ENCODE measurements at regions of chr2 and their contacts with region 1.

Region 1: GRCh38 chr2:30231212-30231995 is at the start of gene LBH:
- DNase-seq: peak; percentile 82 to 97 (median 89)
- ATAC-seq: peak; percentile 48
- H3K4me3 ChIP-seq: peak within 1 kb of the TSS; percentile 89 to 96
- H3K4me3 Mint-ChIP-seq: peak within 1 kb of the TSS; percentile 94
- H3K27ac ChIP-seq: peak within 1 kb of the TSS; percentile 92 to 99
- H3K27ac Mint-ChIP-seq: peak within 1 kb of the TSS; percentile 96
- H3K4me1 ChIP-seq: peaks cover 52% of the 10 kb centered on the region
- H3K4me1 Mint-ChIP-seq: peaks cover 64% of the 10 kb centered on the region
- H3K27me3 ChIP-seq: no peaks in the 10 kb centered on the region
- H3K27me3 Mint-ChIP-seq: no peaks in the 10 kb centered on the region
- CTCF ChIP-seq: no peak
- total RNA-seq, gene LBH: 127 to 133 TPM

Region 2: DNA sequence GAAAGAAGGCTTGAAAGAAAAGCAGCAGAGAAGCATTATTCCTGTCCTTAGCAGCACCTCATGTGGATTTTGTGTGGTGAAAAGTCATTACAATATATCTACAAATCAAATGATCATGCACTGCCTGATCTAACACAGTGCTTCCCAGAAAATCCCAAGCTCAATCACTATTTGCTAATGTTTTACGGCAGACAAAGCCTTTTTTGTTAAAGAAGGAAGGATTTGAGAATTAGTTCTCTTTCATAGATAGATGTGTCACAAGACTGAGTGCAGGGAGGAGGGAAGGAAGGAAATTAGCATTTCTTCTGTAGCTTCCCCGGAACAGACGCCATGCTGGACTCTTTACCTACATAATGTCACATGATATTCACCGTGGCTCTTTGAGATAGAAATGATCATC is 513.1 kb before region 1 on chr2:
- CTCF ChIA-PET with region 1: no interaction called
- POLR2A ChIA-PET with region 1: no interaction called
- intact Hi-C with region 1: no loop called
- DNase-seq: no peak
- ATAC-seq: no peak
- H3K4me3 ChIP-seq: no peak overlapping the region
- H3K4me3 Mint-ChIP-seq: no peak overlapping the region
- H3K27ac ChIP-seq: no peak overlapping the region
- H3K27ac Mint-ChIP-seq: no peak overlapping the region
- H3K4me1 ChIP-seq: no peaks in the 10 kb centered on the region
- H3K4me1 Mint-ChIP-seq: no peaks in the 10 kb centered on the region
- H3K27me3 ChIP-seq: no peaks in the 10 kb centered on the region
- H3K27me3 Mint-ChIP-seq: peaks cover 10% of the 10 kb centered on the region
- CTCF ChIP-seq: no peak

Region 3: DNA sequence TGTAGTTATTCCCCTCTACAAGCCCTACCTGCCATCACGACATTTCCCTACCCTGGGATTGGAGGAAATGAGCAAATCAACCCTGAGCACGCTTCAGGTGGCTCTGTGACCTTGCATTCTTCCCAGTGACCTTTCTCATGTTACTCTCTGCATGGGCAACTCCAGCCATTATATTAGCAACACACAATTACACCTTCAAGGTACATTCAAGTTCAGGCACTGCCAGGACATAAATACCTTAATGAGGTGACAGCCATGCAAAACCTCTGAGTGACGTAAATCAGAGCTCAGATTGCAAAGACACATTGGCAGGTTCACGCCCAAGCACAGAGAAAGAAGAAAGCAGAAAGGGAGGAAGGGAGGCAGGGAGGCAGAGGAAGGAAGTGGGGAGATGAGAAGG is 241.3 kb before region 1 on chr2:
- CTCF ChIA-PET with region 1: no interaction called
- POLR2A ChIA-PET with region 1: no interaction called
- intact Hi-C with region 1: no loop called
- DNase-seq: no peak
- ATAC-seq: no peak
- H3K4me3 ChIP-seq: no peak overlapping the region
- H3K4me3 Mint-ChIP-seq: no peak overlapping the region
- H3K27ac ChIP-seq: no peak overlapping the region
- H3K27ac Mint-ChIP-seq: no peak overlapping the region
- H3K4me1 ChIP-seq: no peaks in the 10 kb centered on the region
- H3K4me1 Mint-ChIP-seq: no peaks in the 10 kb centered on the region
- H3K27me3 ChIP-seq: peaks cover 0 to 4% of the 10 kb centered on the region in 2 experiments
- H3K27me3 Mint-ChIP-seq: peaks cover 17% of the 10 kb centered on the region
- CTCF ChIP-seq: no peak

Region 4: GRCh38 chr2:30146438-30147147 is 84.8 kb before region 1 on chr2 and contains the start of gene YPEL5:
- CTCF ChIA-PET with region 1: interaction called, 8 read pairs
- POLR2A ChIA-PET with region 1: interaction called, 83 read pairs
- intact Hi-C with region 1: loop called (anchors 1 kb)
- DNase-seq: peak; percentile 99 to 100 (median 100)
- ATAC-seq: peak; percentile 82
- H3K4me3 ChIP-seq: peak within 1 kb of the TSS; percentile 75 to 76
- H3K4me3 Mint-ChIP-seq: peak within 1 kb of the TSS; percentile 89
- H3K27ac ChIP-seq: peak within 1 kb of the TSS; percentile 97 to 100
- H3K27ac Mint-ChIP-seq: peak within 1 kb of the TSS; percentile 100
- H3K4me1 ChIP-seq: peaks cover 50% of the 10 kb centered on the region
- H3K4me1 Mint-ChIP-seq: peaks cover 60% of the 10 kb centered on the region
- H3K27me3 ChIP-seq: no peaks in the 10 kb centered on the region
- H3K27me3 Mint-ChIP-seq: no peaks in the 10 kb centered on the region
- CTCF ChIP-seq: no peak
- total RNA-seq, gene YPEL5: 1,051 to 1,071 TPM

Region 5: DNA sequence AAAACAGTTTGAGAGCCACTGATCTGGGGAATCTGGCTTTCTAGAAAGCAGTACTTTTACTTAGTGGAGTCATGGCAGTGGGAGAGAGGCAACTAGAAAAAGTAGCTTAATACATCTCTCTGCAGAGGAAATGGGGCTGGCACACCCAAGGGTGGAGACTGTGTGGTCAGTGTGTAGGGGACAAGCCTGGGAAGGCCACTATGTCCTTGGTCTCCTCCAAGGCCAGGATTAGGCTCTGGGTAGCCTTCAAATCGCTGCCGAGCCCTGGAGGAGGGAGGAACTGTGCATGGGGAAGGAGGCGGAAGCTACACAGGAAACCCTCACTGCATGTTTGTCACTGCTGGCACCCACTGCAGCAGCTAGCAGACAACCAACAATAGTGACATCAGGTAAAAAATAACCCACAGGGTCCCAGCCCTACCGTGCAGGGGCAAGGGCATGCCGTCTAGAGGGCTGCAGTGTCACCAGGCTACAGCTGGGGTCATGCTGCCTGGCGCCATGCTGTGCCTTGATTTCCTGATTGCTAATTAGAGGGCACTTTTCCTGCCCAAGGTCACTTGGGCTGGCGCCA is 34.7 kb after region 1 on chr2:
- CTCF ChIA-PET with region 1: interaction called, 4 read pairs
- POLR2A ChIA-PET with region 1: interaction called, 63 read pairs
- intact Hi-C with region 1: loop called (anchors 1 to 2 kb)
- DNase-seq: peak; percentile 49 to 89 (median 71)
- ATAC-seq: peak; percentile 90
- H3K4me3 ChIP-seq: peak overlapping the region; percentile 31 to 40
- H3K4me3 Mint-ChIP-seq: peak overlapping the region; percentile 82
- H3K27ac ChIP-seq: peak overlapping the region; percentile 72 to 87
- H3K27ac Mint-ChIP-seq: peak overlapping the region; percentile 98
- H3K4me1 ChIP-seq: peaks cover 69% of the 10 kb centered on the region
- H3K4me1 Mint-ChIP-seq: peaks cover 85% of the 10 kb centered on the region
- H3K27me3 ChIP-seq: no peaks in the 10 kb centered on the region
- H3K27me3 Mint-ChIP-seq: no peaks in the 10 kb centered on the region
- CTCF ChIP-seq: no peak

Region 6: DNA sequence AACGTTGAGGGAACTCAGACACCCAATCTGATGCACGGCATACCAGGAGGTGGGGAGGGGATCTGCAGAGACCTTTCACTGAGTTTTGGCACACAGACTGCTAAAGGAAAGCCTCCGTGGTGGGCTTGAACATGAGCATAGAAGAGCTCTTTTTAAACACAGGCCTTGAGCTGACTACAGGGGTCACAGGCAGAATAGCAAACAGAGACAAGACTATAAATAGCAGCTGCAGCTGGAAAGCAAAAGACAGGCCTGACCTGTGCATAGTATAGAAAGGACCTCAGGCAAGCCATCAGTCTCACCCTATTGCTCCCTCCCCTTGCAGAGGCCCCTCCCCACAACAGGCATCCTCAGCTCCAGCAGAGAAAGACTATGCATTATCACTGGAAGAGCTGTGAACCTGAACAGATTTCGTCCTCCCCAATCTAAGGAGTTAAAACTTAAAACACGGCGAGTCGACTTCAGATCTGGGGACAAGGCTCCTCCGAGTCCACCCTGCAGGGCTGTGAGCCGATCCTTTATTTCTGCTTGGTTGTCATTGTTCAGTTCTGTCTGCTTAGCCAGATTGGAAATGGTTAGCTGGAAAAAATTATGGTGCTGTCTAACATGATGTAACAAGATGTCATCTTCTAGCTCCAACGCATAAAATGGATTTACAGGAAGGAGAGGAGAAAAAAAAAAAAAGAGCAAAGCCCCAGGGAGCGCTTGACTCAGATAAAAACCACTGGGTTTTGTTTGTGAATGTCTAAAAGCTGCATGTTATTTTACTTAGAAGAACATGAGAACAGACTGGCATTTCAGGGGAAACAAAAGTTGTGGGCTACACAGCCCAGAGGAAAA is 190.4 kb after region 1 on chr2:
- CTCF ChIA-PET with region 1: interaction called, 9 read pairs
- POLR2A ChIA-PET with region 1: interaction called, 30 read pairs
- intact Hi-C with region 1: loop called (anchors 1 to 5 kb)
- DNase-seq: peak in 6 of 9 experiments; percentile 27 to 81 (median 57)
- ATAC-seq: peak; percentile 45
- H3K4me3 ChIP-seq: peak overlapping the region in 1 of 2 experiments; percentile 26
- H3K4me3 Mint-ChIP-seq: peak overlapping the region; percentile 53
- H3K27ac ChIP-seq: peak overlapping the region; percentile 60 to 70
- H3K27ac Mint-ChIP-seq: peak overlapping the region; percentile 95
- H3K4me1 ChIP-seq: peaks cover 54% of the 10 kb centered on the region
- H3K4me1 Mint-ChIP-seq: peaks cover 51% of the 10 kb centered on the region
- H3K27me3 ChIP-seq: no peaks in the 10 kb centered on the region
- H3K27me3 Mint-ChIP-seq: no peaks in the 10 kb centered on the region
- CTCF ChIP-seq: no peak

Region 7: DNA sequence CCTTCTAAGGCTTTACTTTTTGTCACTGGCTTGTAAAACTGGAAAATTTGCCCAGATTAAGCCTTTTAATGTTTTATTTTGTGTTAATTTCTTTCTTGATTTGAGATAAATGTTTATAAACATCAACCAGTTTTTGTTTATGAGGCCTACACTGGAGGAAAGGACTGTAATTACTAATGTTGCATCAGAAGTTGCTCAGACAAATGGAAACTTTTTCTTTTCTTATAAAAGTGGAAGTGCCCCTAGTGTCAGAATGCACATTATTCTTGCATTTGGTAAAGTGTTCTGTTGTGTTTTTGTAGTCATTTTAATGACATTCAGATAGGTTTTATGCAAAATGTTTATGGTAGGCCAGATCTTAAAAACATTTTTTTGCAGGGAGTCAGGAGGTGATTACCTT is 240.9 kb after region 1 on chr2:
- CTCF ChIA-PET with region 1: interaction called, 9 read pairs
- POLR2A ChIA-PET with region 1: interaction called, 10 read pairs
- intact Hi-C with region 1: loop called in 1 of 2 experiments (anchors 2 kb)
- DNase-seq: no peak
- ATAC-seq: no peak
- H3K4me3 ChIP-seq: no peak overlapping the region
- H3K4me3 Mint-ChIP-seq: no peak overlapping the region
- H3K27ac ChIP-seq: no peak overlapping the region
- H3K27ac Mint-ChIP-seq: no peak overlapping the region
- H3K4me1 ChIP-seq: peaks cover 14% of the 10 kb centered on the region
- H3K4me1 Mint-ChIP-seq: peaks cover 49% of the 10 kb centered on the region
- H3K27me3 ChIP-seq: no peaks in the 10 kb centered on the region
- H3K27me3 Mint-ChIP-seq: no peaks in the 10 kb centered on the region
- CTCF ChIP-seq: no peak

Region 8: GRCh38 chr2:30611583-30611982 is 380.2 kb after region 1 on chr2:
- CTCF ChIA-PET with region 1: no interaction called
- POLR2A ChIA-PET with region 1: no interaction called
- intact Hi-C with region 1: no loop called
- DNase-seq: no peak
- ATAC-seq: no peak
- H3K4me3 ChIP-seq: no peak overlapping the region
- H3K4me3 Mint-ChIP-seq: no peak overlapping the region
- H3K27ac ChIP-seq: no peak overlapping the region
- H3K27ac Mint-ChIP-seq: no peak overlapping the region
- H3K4me1 ChIP-seq: no peaks in the 10 kb centered on the region
- H3K4me1 Mint-ChIP-seq: no peaks in the 10 kb centered on the region
- H3K27me3 ChIP-seq: no peaks in the 10 kb centered on the region
- H3K27me3 Mint-ChIP-seq: no peaks in the 10 kb centered on the region
- CTCF ChIP-seq: no peak

Measured in CD8-positive, alpha-beta T cell (primary cell).